PC-9 (cell line): ENCODE measurements at regions of chr11 and their contacts with region 1.

Region 1: GRCh38 chr11:5712507-5712906 is 22.9 kb downstream of the TRIM22 start:
- DNase-seq: no peak
- H3K4me3 ChIP-seq: no peak overlapping the region
- H3K27ac ChIP-seq: no peak overlapping the region
- H3K4me1 ChIP-seq: no peaks in the 10 kb centered on the region
- H3K27me3 ChIP-seq: no peaks in the 10 kb centered on the region
- CTCF ChIP-seq: peak; percentile 68

Region 2: GRCh38 chr11:5420993-5421392 is 291.5 kb before region 1 on chr11:
- CTCF ChIA-PET with region 1: no interaction called
- POLR2A ChIA-PET with region 1: no interaction called
- intact Hi-C with region 1: no loop called
- DNase-seq: no peak
- H3K4me3 ChIP-seq: no peak overlapping the region
- H3K27ac ChIP-seq: no peak overlapping the region
- H3K4me1 ChIP-seq: no peaks in the 10 kb centered on the region
- H3K27me3 ChIP-seq: no peaks in the 10 kb centered on the region
- CTCF ChIP-seq: no peak

Region 3: DNA sequence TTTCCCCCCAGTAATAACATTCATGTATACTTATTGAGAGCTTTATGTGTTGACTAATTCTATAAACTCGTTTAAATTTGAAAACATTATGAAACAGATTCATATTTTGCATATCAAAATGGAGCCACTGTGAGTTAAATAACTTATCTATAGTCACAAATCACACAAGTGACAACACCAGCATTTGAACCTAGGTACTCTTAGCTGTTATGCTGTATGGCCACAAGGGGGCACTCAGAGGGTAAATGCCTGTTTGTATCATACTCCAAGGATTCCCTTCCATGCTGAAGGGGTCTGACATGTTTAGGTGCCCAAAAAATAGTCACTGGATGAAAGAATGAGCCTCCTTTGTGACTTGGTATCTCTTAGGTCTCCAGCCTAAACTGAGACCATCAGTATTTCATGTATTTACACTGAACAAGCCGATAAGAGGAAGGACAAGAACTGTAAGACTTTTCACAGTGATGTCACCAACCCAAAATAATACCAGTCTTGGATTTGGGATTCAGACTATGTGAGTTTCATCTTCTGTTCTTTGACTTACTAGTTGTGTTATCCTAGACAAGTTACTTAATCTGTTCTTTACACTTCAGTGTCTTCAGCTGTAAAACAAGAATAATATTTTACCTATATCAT is 236.2 kb before region 1 on chr11:
- CTCF ChIA-PET with region 1: no interaction called
- POLR2A ChIA-PET with region 1: no interaction called
- intact Hi-C with region 1: loop called (anchors 2 kb)
- DNase-seq: peak in 1 of 2 experiments; percentile 4
- H3K4me3 ChIP-seq: no peak overlapping the region
- H3K27ac ChIP-seq: no peak overlapping the region
- H3K4me1 ChIP-seq: no peaks in the 10 kb centered on the region
- H3K27me3 ChIP-seq: no peaks in the 10 kb centered on the region
- CTCF ChIP-seq: peak; percentile 77

Region 4: DNA sequence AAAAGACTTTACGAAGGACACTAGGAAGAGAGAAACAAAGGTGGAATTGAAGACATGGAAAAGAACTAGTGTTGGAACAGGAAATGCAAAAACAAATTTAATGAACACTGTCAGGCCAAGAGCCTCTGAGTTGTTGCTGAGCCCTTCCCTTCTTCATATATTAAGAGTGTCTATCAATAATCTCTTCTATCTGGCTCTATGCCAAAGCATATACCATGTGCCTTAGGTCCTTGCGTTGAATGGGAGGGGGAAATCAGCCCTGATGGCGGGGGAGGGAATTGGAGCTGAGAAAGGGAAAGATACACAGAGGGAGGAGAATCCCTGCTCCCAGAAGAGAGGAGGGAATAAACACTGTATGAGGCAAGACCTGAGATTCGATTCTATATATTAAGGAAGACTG is 137.4 kb before region 1 on chr11:
- CTCF ChIA-PET with region 1: no interaction called
- POLR2A ChIA-PET with region 1: no interaction called
- intact Hi-C with region 1: no loop called
- DNase-seq: no peak
- H3K4me3 ChIP-seq: no peak overlapping the region
- H3K27ac ChIP-seq: no peak overlapping the region
- H3K4me1 ChIP-seq: no peaks in the 10 kb centered on the region
- H3K27me3 ChIP-seq: no peaks in the 10 kb centered on the region
- CTCF ChIP-seq: no peak

Region 5: GRCh38 chr11:5684036-5684645 is 28.4 kb before region 1 on chr11:
- CTCF ChIA-PET with region 1: no interaction called
- POLR2A ChIA-PET with region 1: no interaction called
- intact Hi-C with region 1: no loop called
- DNase-seq: no peak
- H3K4me3 ChIP-seq: peak overlapping the region; percentile 61
- H3K27ac ChIP-seq: peak overlapping the region; percentile 93
- H3K4me1 ChIP-seq: peaks cover 14% of the 10 kb centered on the region
- H3K27me3 ChIP-seq: no peaks in the 10 kb centered on the region
- CTCF ChIP-seq: no peak